Breast epithelium (tissue), 4 donors: ENCODE measurements at regions of chr4 and their contacts with region 1.

Region 1: DNA sequence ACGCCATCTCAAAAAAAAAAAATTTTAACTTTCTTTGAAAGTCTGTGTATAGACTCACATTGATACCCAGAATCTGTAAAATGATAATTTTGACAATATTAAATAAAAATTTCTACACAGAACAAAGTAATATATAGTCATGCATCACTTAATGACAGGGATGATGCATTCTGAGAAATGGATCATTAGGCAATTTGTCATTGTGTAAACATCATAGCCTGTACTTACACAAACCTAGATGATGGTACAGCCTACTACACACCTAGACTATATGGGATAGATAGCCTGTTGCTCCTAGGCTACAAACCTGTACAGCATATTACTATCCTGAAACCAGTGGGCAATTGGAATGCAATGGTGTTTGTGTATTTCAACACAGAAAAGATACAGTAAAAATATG is 107.7 kb downstream of the BLTP1 start:
- DNase-seq: no peak
- H3K4me3 ChIP-seq: no peak overlapping the region
- H3K27ac ChIP-seq: no peak overlapping the region
- H3K4me1 ChIP-seq: no peaks in the 10 kb centered on the region
- H3K27me3 ChIP-seq: no peaks in the 10 kb centered on the region
- CTCF ChIP-seq: no peak
- POLR2A ChIP-seq: no peak

Region 2: DNA sequence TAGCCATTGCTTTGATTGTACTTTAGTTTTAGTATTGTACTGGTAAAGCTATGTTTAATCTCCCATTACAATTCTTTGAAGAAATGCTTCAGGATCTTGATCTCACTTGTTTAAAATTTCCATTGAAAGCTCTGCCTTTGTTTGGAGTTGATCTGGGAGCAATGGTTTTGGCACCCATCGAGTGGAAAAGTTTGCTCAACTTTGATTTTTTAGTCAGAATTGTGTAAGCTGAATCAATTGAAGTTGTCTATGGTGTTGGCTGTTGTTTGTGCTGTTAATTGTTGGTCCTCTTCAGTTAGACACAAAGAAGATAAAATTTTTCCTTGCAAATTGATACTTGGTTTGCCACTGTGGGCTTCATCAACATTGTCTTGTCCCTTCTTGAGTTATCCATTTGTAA is 19.1 kb after region 1 on chr4:
- intact Hi-C with region 1: loop called (anchors 1 kb)
- DNase-seq: no peak
- H3K4me3 ChIP-seq: no peak overlapping the region
- H3K27ac ChIP-seq: no peak overlapping the region
- H3K4me1 ChIP-seq: no peaks in the 10 kb centered on the region
- H3K27me3 ChIP-seq: no peaks in the 10 kb centered on the region
- CTCF ChIP-seq: no peak
- POLR2A ChIP-seq: no peak